ENCODE measurements at regions of chr19 and their contacts with region 1.

Region 1: GRCh38 chr19:39792999-39793546 is 14.4 kb downstream of the LEUTX start:
- DNase-seq: peak; percentile 54
- H3K4me3 ChIP-seq: peak overlapping the region; percentile 26 to 33
- H3K27ac ChIP-seq: no peak overlapping the region
- H3K4me1 ChIP-seq: no peaks in the 10 kb centered on the region
- H3K27me3 ChIP-seq: no peaks in the 10 kb centered on the region
- CTCF ChIP-seq: peak in 3 of 4 experiments; percentile 69 to 85 (median 71)
- POLR2A ChIP-seq: no peak

Region 2: DNA sequence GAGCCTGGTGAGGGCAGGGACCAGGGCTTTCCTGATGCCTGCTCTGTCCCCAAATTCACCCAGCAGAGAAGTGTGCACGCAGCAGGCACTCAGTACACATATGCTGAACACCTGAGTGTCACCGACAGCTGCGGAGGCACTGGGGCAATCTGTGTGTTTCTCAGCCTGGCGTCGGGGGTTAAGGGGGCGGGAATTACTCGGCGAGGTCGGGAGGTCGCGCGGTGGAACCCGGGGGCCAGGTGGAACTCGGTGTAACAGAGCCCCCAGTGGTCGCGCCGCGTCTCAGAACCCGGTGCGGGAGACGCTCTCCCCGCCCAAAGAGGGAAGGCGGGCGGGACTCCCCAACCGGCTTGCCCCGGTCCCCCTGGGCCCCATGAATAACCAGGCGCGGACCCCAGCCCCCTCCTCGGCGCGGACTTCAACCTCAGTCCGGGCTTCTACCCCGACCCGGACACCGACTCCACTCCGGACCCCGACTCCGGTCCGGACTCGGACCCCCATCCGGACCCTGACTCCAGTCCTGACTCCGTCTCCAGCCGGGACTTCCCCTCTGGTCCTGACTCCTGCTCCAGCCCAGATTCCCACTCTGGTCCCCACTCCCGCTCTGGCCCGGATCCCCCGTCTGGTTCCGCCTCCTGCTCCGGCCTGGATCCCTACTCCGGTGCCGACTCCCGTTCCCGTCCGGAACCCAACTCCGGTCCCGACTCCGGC is 278.1 kb before region 1 on chr19 and contains the start of gene SELENOV:
- intact Hi-C with region 1: no loop called
- DNase-seq: no peak
- H3K4me3 ChIP-seq: peak within 1 kb of the TSS; percentile 21 to 24
- H3K27ac ChIP-seq: no peak within 1 kb of the TSS
- H3K4me1 ChIP-seq: peaks cover 7% of the 10 kb centered on the region
- H3K27me3 ChIP-seq: peaks cover 5% of the 10 kb centered on the region
- CTCF ChIP-seq: no peak
- POLR2A ChIP-seq: no peak
- total RNA-seq, gene SELENOV: not detected

Region 3: DNA sequence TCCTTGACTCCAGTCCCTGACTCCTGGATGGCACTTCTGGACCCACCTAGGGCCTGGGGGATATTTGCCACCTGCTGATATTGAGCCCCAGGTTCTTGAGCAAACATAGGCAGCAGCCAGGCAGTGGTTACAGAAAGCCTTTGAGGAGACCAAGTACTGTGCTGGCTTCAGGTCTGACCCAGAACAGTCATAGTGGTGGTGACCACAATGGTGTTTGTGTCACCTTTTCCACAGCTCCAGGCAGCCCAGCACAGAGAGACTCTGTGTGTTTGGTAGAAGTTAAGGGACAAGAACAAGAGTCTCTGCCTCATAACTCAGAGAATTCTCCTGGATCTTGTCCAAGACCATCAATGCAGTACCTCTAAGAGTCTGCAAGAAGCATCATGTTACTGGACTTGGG is 40.7 kb before region 1 on chr19:
- intact Hi-C with region 1: no loop called
- DNase-seq: no peak
- H3K4me3 ChIP-seq: no peak overlapping the region
- H3K27ac ChIP-seq: no peak overlapping the region
- H3K4me1 ChIP-seq: no peaks in the 10 kb centered on the region
- H3K27me3 ChIP-seq: peaks cover 2% of the 10 kb centered on the region
- CTCF ChIP-seq: no peak
- POLR2A ChIP-seq: no peak

Region 4: DNA sequence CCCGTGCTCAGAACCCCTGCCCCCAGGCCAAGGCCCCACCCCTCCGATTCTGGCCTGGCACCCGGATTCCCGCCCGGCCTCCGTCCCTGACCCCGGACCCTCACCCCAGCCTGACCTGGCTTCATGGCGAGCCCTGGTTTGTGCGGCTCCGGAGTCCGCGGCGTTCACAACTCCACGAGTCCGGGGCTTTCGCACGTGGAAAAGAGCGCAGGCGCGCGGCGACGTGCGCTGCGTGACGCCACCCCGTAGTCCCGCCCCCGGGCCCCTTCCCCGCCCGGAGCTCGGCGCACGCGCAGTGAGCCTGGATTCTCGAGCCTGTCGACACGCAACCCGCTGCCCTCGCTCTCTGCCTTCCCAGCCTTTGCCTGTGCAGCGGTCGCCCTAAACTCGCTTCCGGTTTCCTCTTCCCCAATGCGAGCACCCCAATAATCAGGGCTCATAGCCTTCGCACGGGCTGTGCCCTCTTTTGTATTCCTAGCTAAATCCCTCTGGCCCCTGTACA is 53.2 kb after region 1 on chr19 and contains the start of gene FBL:
- intact Hi-C with region 1: loop called (anchors 2 kb)
- DNase-seq: peak; percentile 94
- H3K4me3 ChIP-seq: peak within 1 kb of the TSS; percentile 60 to 85
- H3K27ac ChIP-seq: peak within 1 kb of the TSS; percentile 74 to 86
- H3K4me1 ChIP-seq: peaks cover 6% of the 10 kb centered on the region
- H3K27me3 ChIP-seq: no peaks in the 10 kb centered on the region
- CTCF ChIP-seq: peak in 1 of 4 experiments; percentile 6
- POLR2A ChIP-seq: peak; percentile 70
- total RNA-seq, gene FBL: 139 to 224 TPM